ENCODE measurements at regions of chr1 and their contacts with region 1.

Region 1: DNA sequence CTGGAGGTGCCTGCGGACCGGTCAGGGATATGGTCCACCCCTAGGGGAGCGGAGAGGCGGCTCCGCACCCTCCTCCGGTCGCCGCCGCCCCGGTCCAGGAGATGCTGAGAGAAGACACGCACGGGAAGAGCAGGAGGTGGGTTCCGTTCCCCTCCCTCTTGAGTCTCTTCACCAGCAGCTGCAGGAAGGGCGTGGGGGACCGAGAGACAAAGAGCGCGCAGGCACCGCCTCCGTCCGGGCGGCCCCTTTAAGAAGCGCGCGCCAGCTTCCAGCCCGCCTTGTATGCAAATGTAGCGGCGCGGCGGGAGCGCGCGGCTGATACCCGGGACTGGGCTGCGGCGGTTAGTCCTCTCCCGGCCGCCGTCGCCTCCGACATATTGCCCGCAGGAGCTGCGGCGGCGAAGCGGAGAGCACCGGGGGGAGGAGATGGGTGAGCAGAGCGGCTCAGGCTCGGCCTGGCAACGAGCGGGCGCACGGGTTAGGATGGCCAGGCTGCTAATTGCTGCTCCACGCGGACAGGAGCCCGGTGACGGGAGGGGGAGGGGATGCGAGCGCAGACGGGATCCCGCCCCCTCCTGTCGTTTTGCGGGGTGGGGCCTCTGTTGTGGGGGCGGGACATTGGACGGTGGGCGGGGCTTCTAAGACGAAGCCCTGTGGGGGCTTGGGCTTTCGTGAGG is at the start of gene TMEM39B:
- DNase-seq: peak; percentile 98
- ATAC-seq: peak; percentile 80
- H3K4me3 ChIP-seq: peak within 1 kb of the TSS; percentile 76 to 92 (median 81)
- H3K4me3 Mint-ChIP-seq: peak within 1 kb of the TSS; percentile 83
- H3K27ac ChIP-seq: peak within 1 kb of the TSS; percentile 73 to 80
- H3K27ac Mint-ChIP-seq: peak within 1 kb of the TSS; percentile 79
- H3K4me1 ChIP-seq: peaks cover 14 to 17% of the 10 kb centered on the region in 2 donors
- H3K4me1 Mint-ChIP-seq: peaks cover 29% of the 10 kb centered on the region
- H3K27me3 ChIP-seq: no peaks in the 10 kb centered on the region
- H3K27me3 Mint-ChIP-seq: no peaks in the 10 kb centered on the region
- CTCF ChIP-seq: no peak
- total RNA-seq, gene TMEM39B: 28.8 and 30.9 TPM in 2 replicates

Region 2: GRCh38 chr1:31663622-31664452 is 408.9 kb before region 1 on chr1:
- CTCF ChIA-PET with region 1: no interaction called
- POLR2A ChIA-PET with region 1: interaction called, 10 read pairs
- intact Hi-C with region 1: no loop called
- DNase-seq: peak; percentile 73
- ATAC-seq: peak; percentile 85
- H3K4me3 ChIP-seq: no peak overlapping the region
- H3K4me3 Mint-ChIP-seq: no peak overlapping the region
- H3K27ac ChIP-seq: no peak overlapping the region
- H3K27ac Mint-ChIP-seq: no peak overlapping the region
- H3K4me1 ChIP-seq: no peaks in the 10 kb centered on the region
- H3K4me1 Mint-ChIP-seq: no peaks in the 10 kb centered on the region
- H3K27me3 ChIP-seq: peaks cover 0 to 6% (median 0%) of the 10 kb centered on the region in 4 experiments
- H3K27me3 Mint-ChIP-seq: peaks cover 5% of the 10 kb centered on the region
- CTCF ChIP-seq: peak; percentile 86

Region 3: DNA sequence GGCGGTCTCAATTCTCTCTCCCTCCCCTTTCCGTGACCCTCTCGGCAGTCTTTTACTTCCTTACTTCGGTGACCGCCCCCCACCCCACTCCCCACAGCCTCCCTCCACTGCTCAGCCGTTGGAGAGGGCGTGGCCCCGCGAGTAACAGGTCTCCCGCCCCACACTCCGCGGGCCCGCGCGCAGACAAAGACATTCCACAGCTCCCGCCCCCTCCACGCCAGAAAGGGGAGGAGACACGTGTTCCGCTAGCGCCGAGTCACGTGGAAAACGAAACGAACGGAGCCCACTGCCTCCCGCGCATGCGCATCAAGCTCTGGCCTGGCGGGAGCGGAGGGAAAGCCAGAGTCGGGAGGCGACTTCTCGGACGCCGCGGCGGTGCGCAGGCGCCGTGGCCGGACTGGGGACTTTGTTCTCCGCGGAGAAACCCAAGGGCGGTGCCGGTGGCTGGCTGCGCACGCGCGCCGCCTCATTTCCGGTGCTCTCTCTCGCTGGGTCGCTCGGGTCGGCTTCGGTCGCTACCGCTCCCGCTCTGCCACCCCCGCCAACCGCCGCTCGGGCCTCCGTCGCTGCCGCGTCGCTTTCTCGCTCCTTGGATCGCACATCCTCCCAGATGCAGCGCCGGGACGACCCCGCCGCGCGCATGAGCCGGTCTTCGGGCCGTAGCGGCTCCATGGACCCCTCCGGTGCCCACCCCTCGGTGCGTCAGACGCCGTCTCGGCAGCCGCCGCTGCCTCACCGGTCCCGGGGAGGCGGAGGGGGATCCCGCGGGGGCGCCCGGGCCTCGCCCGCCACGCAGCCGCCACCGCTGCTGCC is 59.2 kb before region 1 on chr1 and contains the start of gene KHDRBS1:
- CTCF ChIA-PET with region 1: interaction called, 3 read pairs
- POLR2A ChIA-PET with region 1: interaction called, 19 read pairs
- intact Hi-C with region 1: loop called (anchors 1 kb)
- DNase-seq: peak; percentile 99
- ATAC-seq: peak; percentile 86
- H3K4me3 ChIP-seq: peak within 1 kb of the TSS; percentile 60 to 96 (median 85)
- H3K4me3 Mint-ChIP-seq: peak within 1 kb of the TSS; percentile 99
- H3K27ac ChIP-seq: peak within 1 kb of the TSS; percentile 89 to 96
- H3K27ac Mint-ChIP-seq: peak within 1 kb of the TSS; percentile 99
- H3K4me1 ChIP-seq: peaks cover 20 to 33% of the 10 kb centered on the region in 2 donors
- H3K4me1 Mint-ChIP-seq: peaks cover 31% of the 10 kb centered on the region
- H3K27me3 ChIP-seq: no peaks in the 10 kb centered on the region
- H3K27me3 Mint-ChIP-seq: no peaks in the 10 kb centered on the region
- CTCF ChIP-seq: no peak
- total RNA-seq, gene KHDRBS1: 99.0 and 101 TPM in 2 replicates

Region 4: DNA sequence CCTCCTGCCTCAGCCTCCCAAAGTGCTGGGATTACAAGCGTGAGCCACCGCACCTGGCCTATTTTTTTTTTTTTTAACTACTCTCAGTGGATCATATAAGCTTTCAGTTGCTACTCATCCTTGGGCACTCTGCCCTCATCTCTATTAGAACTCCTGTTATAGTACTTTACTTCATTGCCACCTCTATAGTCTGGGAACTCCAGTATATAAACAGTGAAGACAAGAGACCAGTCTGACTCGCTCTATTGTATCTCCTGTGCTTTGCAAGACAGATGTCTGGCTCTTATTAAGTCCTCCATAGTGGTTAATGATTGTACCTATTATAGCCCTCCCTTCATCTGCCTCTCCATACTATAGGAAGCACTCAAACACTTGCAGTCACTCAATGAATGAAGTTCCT is 44.0 kb before region 1 on chr1:
- CTCF ChIA-PET with region 1: no interaction called
- POLR2A ChIA-PET with region 1: no interaction called
- intact Hi-C with region 1: no loop called
- DNase-seq: no peak
- ATAC-seq: no peak
- H3K4me3 ChIP-seq: no peak overlapping the region
- H3K4me3 Mint-ChIP-seq: no peak overlapping the region
- H3K27ac ChIP-seq: no peak overlapping the region
- H3K27ac Mint-ChIP-seq: no peak overlapping the region
- H3K4me1 ChIP-seq: peaks cover 4 to 12% of the 10 kb centered on the region in 2 donors
- H3K4me1 Mint-ChIP-seq: peaks cover 43% of the 10 kb centered on the region
- H3K27me3 ChIP-seq: no peaks in the 10 kb centered on the region
- H3K27me3 Mint-ChIP-seq: no peaks in the 10 kb centered on the region
- CTCF ChIP-seq: no peak

Region 5: GRCh38 chr1:32179443-32180185 is 106.9 kb after region 1 on chr1 and contains the start of gene TXLNA:
- CTCF ChIA-PET with region 1: no interaction called
- POLR2A ChIA-PET with region 1: interaction called, 10 read pairs
- intact Hi-C with region 1: no loop called
- DNase-seq: peak; percentile 94
- ATAC-seq: peak; percentile 90
- H3K4me3 ChIP-seq: peak within 1 kb of the TSS; percentile 71 to 92 (median 76)
- H3K4me3 Mint-ChIP-seq: peak within 1 kb of the TSS; percentile 96
- H3K27ac ChIP-seq: peak within 1 kb of the TSS; percentile 76 to 90
- H3K27ac Mint-ChIP-seq: peak within 1 kb of the TSS; percentile 99
- H3K4me1 ChIP-seq: peaks cover 21 to 31% of the 10 kb centered on the region in 2 donors
- H3K4me1 Mint-ChIP-seq: peaks cover 35% of the 10 kb centered on the region
- H3K27me3 ChIP-seq: no peaks in the 10 kb centered on the region
- H3K27me3 Mint-ChIP-seq: no peaks in the 10 kb centered on the region
- CTCF ChIP-seq: no peak
- total RNA-seq, gene TXLNA: 38.3 and 38.4 TPM in 2 replicates

Region 6: GRCh38 chr1:32291708-32292492 is 219.1 kb after region 1 on chr1 and contains the start of gene HDAC1:
- CTCF ChIA-PET with region 1: no interaction called
- POLR2A ChIA-PET with region 1: interaction called, 3 read pairs
- intact Hi-C with region 1: loop called (anchors 1 kb)
- DNase-seq: peak; percentile 96
- ATAC-seq: peak; percentile 98
- H3K4me3 ChIP-seq: peak within 1 kb of the TSS; percentile 77 to 98 (median 88)
- H3K4me3 Mint-ChIP-seq: peak within 1 kb of the TSS; percentile 100
- H3K27ac ChIP-seq: peak within 1 kb of the TSS; percentile 81 to 87
- H3K27ac Mint-ChIP-seq: peak within 1 kb of the TSS; percentile 99
- H3K4me1 ChIP-seq: peaks cover 41 to 42% of the 10 kb centered on the region in 2 donors
- H3K4me1 Mint-ChIP-seq: peaks cover 39% of the 10 kb centered on the region
- H3K27me3 ChIP-seq: no peaks in the 10 kb centered on the region
- H3K27me3 Mint-ChIP-seq: no peaks in the 10 kb centered on the region
- CTCF ChIP-seq: peak; percentile 1
- total RNA-seq, gene HDAC1: 200 and 205 TPM in 2 replicates

Region 7: DNA sequence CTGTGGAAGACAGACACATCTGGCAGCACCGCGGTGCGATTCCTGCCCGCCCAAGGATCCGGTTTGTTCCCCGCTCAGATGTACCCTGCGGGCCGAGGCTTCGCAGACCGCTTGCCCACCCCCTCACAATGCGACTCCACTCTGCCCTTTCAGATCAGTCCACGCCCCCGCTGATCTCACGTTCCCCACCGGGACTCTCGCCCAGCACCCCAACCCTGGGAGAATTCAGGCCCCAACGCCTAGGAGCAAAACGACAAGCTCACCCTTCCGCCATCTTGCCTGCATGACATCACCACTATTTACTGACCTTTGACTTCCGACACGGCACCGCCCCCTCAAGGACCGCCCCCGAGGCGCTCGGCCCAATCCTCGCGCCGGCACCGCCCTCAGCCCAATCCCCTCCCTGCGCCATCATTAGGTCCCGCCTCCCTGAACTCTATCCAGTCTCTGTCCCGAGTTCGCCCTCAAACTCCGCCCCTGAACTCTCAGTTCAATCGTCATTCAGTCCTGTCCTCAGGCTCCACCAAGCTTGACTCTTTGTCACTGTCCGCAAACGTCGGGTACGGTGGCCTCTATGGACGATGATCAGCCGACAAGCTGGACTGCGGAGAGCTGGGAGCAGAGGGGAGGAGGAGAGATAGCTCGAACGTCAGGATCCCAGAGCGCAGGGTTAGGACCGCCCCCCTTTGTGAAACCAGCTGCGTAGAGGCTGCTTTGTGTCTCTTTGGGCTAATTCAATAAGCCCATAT is 321.6 kb after region 1 on chr1 and contains the start of gene BSDC1:
- CTCF ChIA-PET with region 1: interaction called, 4 read pairs
- POLR2A ChIA-PET with region 1: interaction called, 3 read pairs
- intact Hi-C with region 1: loop called (anchors 1 kb)
- DNase-seq: peak; percentile 99
- ATAC-seq: peak; percentile 99
- H3K4me3 ChIP-seq: peak within 1 kb of the TSS; percentile 66 to 94 (median 84)
- H3K4me3 Mint-ChIP-seq: peak within 1 kb of the TSS; percentile 99
- H3K27ac ChIP-seq: peak within 1 kb of the TSS; percentile 91
- H3K27ac Mint-ChIP-seq: peak within 1 kb of the TSS; percentile 99
- H3K4me1 ChIP-seq: peaks cover 14 to 27% of the 10 kb centered on the region in 2 donors
- H3K4me1 Mint-ChIP-seq: peaks cover 31% of the 10 kb centered on the region
- H3K27me3 ChIP-seq: no peaks in the 10 kb centered on the region
- H3K27me3 Mint-ChIP-seq: peaks cover 3% of the 10 kb centered on the region
- CTCF ChIP-seq: no peak
- total RNA-seq, gene BSDC1: 117 and 124 TPM in 2 replicates

Region 8: GRCh38 chr1:32426489-32427255 is 353.9 kb after region 1 on chr1:
- CTCF ChIA-PET with region 1: no interaction called
- POLR2A ChIA-PET with region 1: no interaction called
- intact Hi-C with region 1: no loop called
- DNase-seq: peak; percentile 38
- ATAC-seq: no peak
- H3K4me3 ChIP-seq: peak overlapping the region in 3 of 5 experiments; percentile 8 to 29 (median 14)
- H3K4me3 Mint-ChIP-seq: peak overlapping the region; percentile 41
- H3K27ac ChIP-seq: no peak overlapping the region
- H3K27ac Mint-ChIP-seq: no peak overlapping the region
- H3K4me1 ChIP-seq: peaks cover 13 to 16% of the 10 kb centered on the region in 2 donors
- H3K4me1 Mint-ChIP-seq: peaks cover 26% of the 10 kb centered on the region
- H3K27me3 ChIP-seq: peaks cover 0 to 34% (median 14%) of the 10 kb centered on the region in 4 experiments
- H3K27me3 Mint-ChIP-seq: peaks cover 30% of the 10 kb centered on the region
- CTCF ChIP-seq: no peak

Region 9: DNA sequence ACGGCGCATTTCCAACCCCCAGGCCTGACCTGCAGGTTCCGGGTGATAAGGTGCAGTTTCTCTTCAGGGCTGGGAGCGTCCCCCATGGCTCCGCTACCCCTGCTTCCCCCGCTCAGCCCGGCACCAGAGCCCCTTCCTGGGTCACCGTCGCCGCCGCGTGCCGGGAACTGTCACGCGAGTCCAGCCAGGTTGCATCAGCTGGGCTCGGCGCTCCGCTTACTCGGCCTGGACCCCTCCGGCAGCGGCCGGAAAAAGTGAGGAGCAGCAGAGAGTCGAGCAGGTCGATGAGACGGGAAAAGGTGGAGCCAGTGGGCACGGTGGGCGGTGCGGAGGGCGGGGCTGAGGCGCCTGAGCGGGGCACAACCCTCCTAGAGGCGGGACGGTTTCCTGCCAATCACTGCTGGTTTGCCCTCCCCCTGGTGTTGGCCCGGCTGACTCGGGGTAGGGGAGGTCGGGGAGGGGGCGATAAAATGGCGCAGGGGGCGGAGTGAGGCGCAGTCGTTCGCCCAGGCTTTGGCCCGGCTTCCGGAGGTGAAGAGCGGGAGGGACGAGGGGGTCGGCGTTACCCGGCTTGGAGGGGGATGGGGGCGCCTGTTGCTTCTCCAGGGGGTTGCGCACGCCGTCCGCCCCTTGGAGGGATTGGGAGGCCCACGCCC is 744.5 kb after region 1 on chr1 and contains the starts of genes S100PBP and YARS1:
- CTCF ChIA-PET with region 1: no interaction called
- POLR2A ChIA-PET with region 1: no interaction called
- intact Hi-C with region 1: loop called (anchors 2 kb)
- DNase-seq: peak; percentile 98
- ATAC-seq: peak; percentile 95
- H3K4me3 ChIP-seq: peak within 1 kb of the TSS; percentile 65 to 97 (median 95)
- H3K4me3 Mint-ChIP-seq: peak within 1 kb of the TSS; percentile 98
- H3K27ac ChIP-seq: peak within 1 kb of the TSS; percentile 78 to 88
- H3K27ac Mint-ChIP-seq: peak within 1 kb of the TSS; percentile 99
- H3K4me1 ChIP-seq: peaks cover 36 to 57% of the 10 kb centered on the region in 2 donors
- H3K4me1 Mint-ChIP-seq: peaks cover 55% of the 10 kb centered on the region
- H3K27me3 ChIP-seq: no peaks in the 10 kb centered on the region
- H3K27me3 Mint-ChIP-seq: no peaks in the 10 kb centered on the region
- CTCF ChIP-seq: no peak
- total RNA-seq, gene S100PBP: 94.1 and 105 TPM in 2 replicates
- total RNA-seq, gene YARS1: 70.7 and 73.2 TPM in 2 replicates

Measured in B cell (primary cell).